Activated B cell treated with CpG ODN at 0.5 μM for 24 hours (primary cell): ENCODE measurements at regions of chr7 and their contacts with region 1.

Region 1: DNA sequence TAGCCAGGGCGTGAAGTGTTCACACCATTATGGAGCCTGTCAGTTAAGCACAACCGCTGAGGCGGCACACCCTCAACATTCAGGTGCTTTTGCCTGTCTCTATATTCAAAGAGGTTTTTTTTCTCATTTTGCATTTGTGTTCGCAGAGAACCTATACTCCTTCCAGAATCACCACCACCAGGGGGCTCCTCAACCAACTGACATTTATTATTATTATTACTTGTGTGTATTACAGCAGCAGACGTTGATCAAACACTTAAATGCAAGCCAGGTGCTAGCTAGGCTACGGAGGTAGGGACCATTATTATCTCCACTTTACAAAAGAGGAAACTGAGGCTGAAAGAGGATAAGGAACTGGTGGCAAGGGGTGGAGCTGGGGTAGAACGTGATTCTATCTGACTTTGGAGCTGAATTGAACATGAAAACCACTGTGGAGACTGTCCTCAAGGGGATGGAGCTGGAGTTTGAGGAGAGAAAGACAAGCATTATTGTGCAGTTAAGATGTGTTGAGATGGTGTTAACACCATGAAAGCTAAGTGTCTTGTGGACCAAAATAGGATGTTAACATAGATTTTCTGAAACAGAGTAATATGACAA is 133.8 kb upstream of the PLXNA4 start:
- DNase-seq: no peak
- ATAC-seq: no peak
- H3K4me3 Mint-ChIP-seq: no peak overlapping the region
- H3K27ac Mint-ChIP-seq: no peak overlapping the region
- H3K4me1 Mint-ChIP-seq: no peaks in the 10 kb centered on the region
- H3K27me3 Mint-ChIP-seq: no peaks in the 10 kb centered on the region
- CTCF ChIP-seq: no peak

Region 2: DNA sequence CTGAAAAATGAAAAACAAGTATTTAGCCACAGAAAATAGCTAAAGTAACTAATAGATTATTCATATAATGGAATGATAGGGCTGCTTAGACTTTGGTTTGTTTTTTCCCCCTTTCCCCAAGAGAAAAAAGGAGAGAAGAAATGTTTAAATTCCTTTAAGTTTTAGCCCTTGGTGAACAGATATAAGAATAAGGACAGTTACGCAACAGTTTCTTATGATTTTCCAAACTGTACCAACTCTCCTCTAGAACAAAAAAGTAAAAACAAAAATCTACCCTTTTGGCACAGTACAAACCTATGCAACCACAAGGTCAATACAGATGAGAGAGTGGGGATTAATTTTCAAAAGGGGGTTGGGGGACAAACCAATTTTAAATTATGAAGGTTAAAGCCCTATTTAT is 144.2 kb after region 1 on chr7:
- CTCF ChIA-PET with region 1: no interaction called
- POLR2A ChIA-PET with region 1: no interaction called
- intact Hi-C with region 1: no loop called
- DNase-seq: no peak
- ATAC-seq: no peak
- H3K4me3 Mint-ChIP-seq: no peak overlapping the region
- H3K27ac Mint-ChIP-seq: no peak overlapping the region
- H3K4me1 Mint-ChIP-seq: peaks cover 9% of the 10 kb centered on the region
- H3K27me3 Mint-ChIP-seq: no peaks in the 10 kb centered on the region
- CTCF ChIP-seq: no peak

Region 3: GRCh38 chr7:133434055-133434865 is 724.2 kb after region 1 on chr7:
- CTCF ChIA-PET with region 1: interaction called, 13 read pairs
- POLR2A ChIA-PET with region 1: no interaction called
- intact Hi-C with region 1: no loop called
- DNase-seq: no peak
- ATAC-seq: no peak
- H3K4me3 Mint-ChIP-seq: no peak overlapping the region
- H3K27ac Mint-ChIP-seq: no peak overlapping the region
- H3K4me1 Mint-ChIP-seq: peaks cover 2% of the 10 kb centered on the region
- H3K27me3 Mint-ChIP-seq: no peaks in the 10 kb centered on the region
- CTCF ChIP-seq: no peak